ENCODE measurements at regions of chr18 and their contacts with region 1.

Region 1: DNA sequence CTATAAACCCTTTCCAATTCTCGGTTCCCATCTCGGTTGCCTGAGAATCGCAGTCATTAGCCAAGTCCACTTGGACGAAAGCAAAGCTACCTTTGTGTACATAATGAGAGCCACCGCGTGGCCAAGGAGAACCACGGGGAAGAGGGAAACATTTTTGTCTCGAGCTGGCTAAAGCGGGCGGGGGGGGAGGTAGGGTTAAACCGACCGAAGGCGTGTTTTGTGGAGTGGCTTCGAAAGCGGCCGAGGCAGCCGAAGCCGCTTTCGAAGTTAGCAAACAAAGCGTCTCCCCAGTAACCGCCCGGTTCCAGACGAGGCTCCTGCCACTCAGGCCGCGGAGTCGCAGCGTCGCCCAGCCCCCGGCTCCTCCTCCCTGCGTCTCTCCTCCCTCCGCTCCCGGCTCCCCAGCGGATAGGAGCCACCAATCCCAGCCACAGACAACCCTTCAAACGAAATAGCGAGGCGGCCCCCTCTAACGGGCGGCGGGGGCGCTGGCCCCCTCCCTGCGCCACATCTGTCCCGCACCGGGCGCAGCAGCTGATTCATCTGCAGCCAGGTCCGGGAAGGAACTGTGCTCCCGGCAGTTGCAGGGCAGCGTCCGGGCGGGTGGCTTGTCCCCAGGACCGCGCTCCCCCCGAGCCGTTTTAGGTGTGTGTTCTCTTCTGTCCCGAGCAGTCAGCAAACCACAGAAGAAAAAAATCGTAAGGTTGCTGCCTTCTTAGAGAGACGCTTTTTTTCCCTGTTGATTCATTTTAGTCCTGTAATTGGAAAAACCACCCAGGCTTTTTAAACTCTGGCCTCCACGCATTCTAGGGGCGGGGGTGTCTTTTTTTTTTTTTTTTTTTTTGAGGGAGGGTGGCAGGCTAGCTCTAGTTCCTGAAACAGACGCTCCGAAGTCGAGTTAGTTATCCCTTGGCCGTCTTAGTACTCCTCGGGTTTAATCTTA is 1.8 kb upstream of the TGIF1 start:
- DNase-seq: peak; percentile 86 to 98 (median 96)
- H3K4me3 ChIP-seq: peak overlapping the region; percentile 70 to 86 (median 77)
- H3K4me3 Mint-ChIP-seq: peak overlapping the region; percentile 90 to 94
- H3K27ac ChIP-seq: peak overlapping the region; percentile 99
- H3K27ac Mint-ChIP-seq: peak overlapping the region; percentile 100
- H3K4me1 ChIP-seq: peaks cover 47 to 55% of the 10 kb centered on the region in 2 donors
- H3K4me1 Mint-ChIP-seq: peaks cover 33% of the 10 kb centered on the region
- H3K27me3 ChIP-seq: no peaks in the 10 kb centered on the region
- H3K27me3 Mint-ChIP-seq: peaks cover 0 to 4% (median 3%) of the 10 kb centered on the region in 3 donors
- CTCF ChIP-seq: no peak

Region 2: GRCh38 chr18:2846636-2847364 is 601.4 kb before region 1 on chr18 and contains the start of gene EMILIN2:
- intact Hi-C with region 1: loop called (anchors 2 to 10 kb)
- DNase-seq: peak; percentile 93 to 96 (median 95)
- H3K4me3 ChIP-seq: peak within 1 kb of the TSS; percentile 97 to 99 (median 97)
- H3K4me3 Mint-ChIP-seq: peak within 1 kb of the TSS; percentile 96 to 97
- H3K27ac ChIP-seq: peak within 1 kb of the TSS; percentile 91 to 98
- H3K27ac Mint-ChIP-seq: peak within 1 kb of the TSS; percentile 95 to 99 (median 97)
- H3K4me1 ChIP-seq: peaks cover 65 to 73% of the 10 kb centered on the region in 2 donors
- H3K4me1 Mint-ChIP-seq: peaks cover 65% of the 10 kb centered on the region
- H3K27me3 ChIP-seq: no peaks in the 10 kb centered on the region
- H3K27me3 Mint-ChIP-seq: no peaks in the 10 kb centered on the region
- CTCF ChIP-seq: no peak
- polyA plus RNA-seq, gene EMILIN2: 30.5 to 43.2 (median 33.8) TPM

Region 3: DNA sequence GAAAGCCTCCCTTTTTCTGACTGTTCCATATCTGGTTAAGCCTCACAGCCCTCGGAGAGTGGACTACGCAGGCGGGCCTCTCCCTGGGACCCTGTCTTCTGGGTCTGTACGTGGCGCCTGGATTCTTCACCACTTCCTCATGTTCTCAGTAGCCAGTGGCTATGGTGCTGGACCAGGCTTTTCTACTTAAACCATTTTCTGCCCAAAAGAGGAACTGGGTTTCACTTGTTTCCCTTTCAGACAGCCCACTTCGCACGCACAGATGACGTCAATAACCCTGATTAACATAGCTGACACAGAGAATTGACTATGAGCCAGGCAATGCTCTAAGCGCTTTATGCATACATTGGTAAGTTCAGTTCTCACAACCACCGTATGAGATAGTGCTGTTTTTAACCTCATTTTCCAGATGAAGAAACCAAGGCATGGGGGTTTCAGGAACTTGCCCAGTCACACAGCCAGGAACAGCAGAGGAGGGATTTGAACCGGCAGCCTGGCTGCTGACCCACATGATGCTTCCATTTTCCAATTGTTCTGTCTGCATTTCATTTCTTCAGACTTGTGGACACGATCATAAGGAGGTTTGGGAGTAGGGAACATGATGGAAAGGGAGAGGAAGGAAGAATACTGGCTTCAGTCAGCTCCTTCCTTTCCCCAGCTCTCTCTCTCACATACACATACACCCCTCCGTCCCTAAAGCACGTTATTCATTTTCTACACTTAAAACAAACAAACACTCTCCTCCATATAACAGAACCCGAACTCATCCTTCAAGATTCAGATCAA is 270.1 kb before region 1 on chr18:
- intact Hi-C with region 1: loop called in 1 of 2 experiments (anchors 10 kb)
- DNase-seq: peak; percentile 99 to 100 (median 100)
- H3K4me3 ChIP-seq: peak overlapping the region in 1 of 3 experiments; percentile 21
- H3K4me3 Mint-ChIP-seq: peak overlapping the region; percentile 43 to 75
- H3K27ac ChIP-seq: peak overlapping the region; percentile 86 to 94
- H3K27ac Mint-ChIP-seq: peak overlapping the region; percentile 97 to 99 (median 98)
- H3K4me1 ChIP-seq: peaks cover 17 to 21% of the 10 kb centered on the region in 2 donors
- H3K4me1 Mint-ChIP-seq: peaks cover 18% of the 10 kb centered on the region
- H3K27me3 ChIP-seq: no peaks in the 10 kb centered on the region
- H3K27me3 Mint-ChIP-seq: no peaks in the 10 kb centered on the region
- CTCF ChIP-seq: no peak

Region 4: GRCh38 chr18:3281456-3282400 is 166.4 kb before region 1 on chr18:
- intact Hi-C with region 1: loop called in 1 of 2 experiments (anchors 10 kb)
- DNase-seq: peak; percentile 57 to 90 (median 68)
- H3K4me3 ChIP-seq: no peak overlapping the region
- H3K4me3 Mint-ChIP-seq: no peak overlapping the region
- H3K27ac ChIP-seq: no peak overlapping the region
- H3K27ac Mint-ChIP-seq: no peak overlapping the region
- H3K4me1 ChIP-seq: peaks cover 17 to 25% of the 10 kb centered on the region in 2 donors
- H3K4me1 Mint-ChIP-seq: peaks cover 32% of the 10 kb centered on the region
- H3K27me3 ChIP-seq: no peaks in the 10 kb centered on the region
- H3K27me3 Mint-ChIP-seq: peaks cover 0 to 4% (median 0%) of the 10 kb centered on the region in 3 donors
- CTCF ChIP-seq: peak; percentile 82

Region 5: DNA sequence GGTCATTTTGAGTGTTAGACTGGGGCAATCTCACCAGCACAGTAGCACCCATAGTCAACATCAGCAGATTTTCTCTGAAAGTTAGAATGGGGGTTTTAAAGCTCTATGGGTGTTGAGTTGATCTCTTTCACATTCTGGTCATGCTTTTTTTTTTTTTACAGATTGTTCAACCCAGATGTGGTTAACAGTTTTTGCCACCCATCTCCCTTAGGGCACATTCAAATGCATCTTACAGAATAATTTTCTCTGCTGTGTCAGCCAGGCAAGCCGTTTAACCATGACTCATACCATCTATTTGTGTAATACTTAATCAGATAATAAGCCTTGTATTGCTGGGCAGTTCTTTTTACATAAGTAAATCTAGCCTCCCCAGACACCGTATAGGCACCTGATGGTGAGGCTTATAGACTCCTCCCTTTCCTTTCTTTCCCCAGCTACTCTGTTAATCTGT is 63.8 kb after region 1 on chr18:
- intact Hi-C with region 1: no loop called
- DNase-seq: peak in 1 of 3 donors; percentile 8
- H3K4me3 ChIP-seq: no peak overlapping the region
- H3K4me3 Mint-ChIP-seq: no peak overlapping the region
- H3K27ac ChIP-seq: no peak overlapping the region
- H3K27ac Mint-ChIP-seq: no peak overlapping the region
- H3K4me1 ChIP-seq: no peaks in the 10 kb centered on the region
- H3K4me1 Mint-ChIP-seq: peaks cover 4% of the 10 kb centered on the region
- H3K27me3 ChIP-seq: no peaks in the 10 kb centered on the region
- H3K27me3 Mint-ChIP-seq: no peaks in the 10 kb centered on the region
- CTCF ChIP-seq: no peak

Region 6: GRCh38 chr18:3593904-3594661 is 145.9 kb after region 1 on chr18:
- intact Hi-C with region 1: loop called (anchors 2 to 5 kb)
- DNase-seq: peak; percentile 83 to 91 (median 85)
- H3K4me3 ChIP-seq: peak overlapping the region; percentile 47 to 71 (median 50)
- H3K4me3 Mint-ChIP-seq: peak overlapping the region; percentile 71 to 84
- H3K27ac ChIP-seq: peak overlapping the region; percentile 93 to 98
- H3K27ac Mint-ChIP-seq: peak overlapping the region; percentile 92 to 99 (median 96)
- H3K4me1 ChIP-seq: peaks cover 52 to 56% of the 10 kb centered on the region in 2 donors
- H3K4me1 Mint-ChIP-seq: peaks cover 46% of the 10 kb centered on the region
- H3K27me3 ChIP-seq: no peaks in the 10 kb centered on the region
- H3K27me3 Mint-ChIP-seq: peaks cover 0 to 5% (median 0%) of the 10 kb centered on the region in 3 donors
- CTCF ChIP-seq: peak; percentile 81

Region 7: DNA sequence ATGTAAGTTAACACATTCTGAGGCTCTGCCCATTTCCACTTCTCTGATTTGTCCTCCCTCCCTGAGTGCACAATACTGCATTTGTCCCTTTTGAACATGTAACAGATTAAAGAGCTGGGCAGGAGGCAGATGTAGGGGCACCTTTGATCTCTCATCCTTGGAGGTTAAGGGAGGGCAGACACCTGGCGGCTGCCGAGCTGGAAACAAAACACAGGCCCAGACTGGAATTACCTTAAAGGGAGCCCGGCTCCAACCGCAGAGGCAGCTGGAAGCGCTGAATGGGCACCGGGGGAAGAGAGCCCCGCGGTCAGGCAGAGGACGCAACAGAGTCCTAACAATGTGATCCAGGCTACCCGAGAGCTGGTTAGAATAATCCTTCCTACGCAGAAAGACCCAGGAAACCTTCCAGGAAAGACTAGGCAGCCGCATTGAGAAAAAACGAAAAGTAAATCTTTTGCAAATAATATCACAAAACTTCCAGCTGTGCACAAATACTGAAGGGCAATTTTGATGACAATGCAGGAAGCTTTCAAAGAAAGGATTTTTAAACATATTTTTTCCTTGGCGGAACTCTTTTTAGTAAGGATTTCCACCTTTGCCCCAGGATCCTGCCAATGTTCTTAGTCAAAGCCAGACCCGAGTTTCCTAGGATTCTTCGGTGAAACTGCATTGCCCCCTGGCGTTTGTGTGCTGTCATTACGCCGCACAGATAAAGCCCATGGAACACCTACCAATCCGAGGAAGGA is 217.8 kb after region 1 on chr18:
- intact Hi-C with region 1: loop called (anchors 2 to 5 kb)
- DNase-seq: peak; percentile 68 to 80 (median 77)
- H3K4me3 ChIP-seq: peak overlapping the region in 1 of 3 experiments; percentile 54
- H3K4me3 Mint-ChIP-seq: peak overlapping the region; percentile 71 to 89
- H3K27ac ChIP-seq: no peak overlapping the region
- H3K27ac Mint-ChIP-seq: peak overlapping the region in 4 of 7 donors; percentile 21 to 61 (median 50)
- H3K4me1 ChIP-seq: peaks cover 33 to 42% of the 10 kb centered on the region in 2 donors
- H3K4me1 Mint-ChIP-seq: peaks cover 36% of the 10 kb centered on the region
- H3K27me3 ChIP-seq: no peaks in the 10 kb centered on the region
- H3K27me3 Mint-ChIP-seq: peaks cover 0 to 3% (median 0%) of the 10 kb centered on the region in 3 donors
- CTCF ChIP-seq: peak; percentile 96

Measured in CD14-positive monocyte (primary cell).